Activated naive CD8-positive, alpha-beta T cell treated with anti-CD3 and anti-CD28 coated beads, Interleukin-2, amount 10 ng/mL, durations not matched to agents 7 days and 5 days (primary cell): ENCODE measurements at regions of chr2 and their contacts with region 1.

Region 1: DNA sequence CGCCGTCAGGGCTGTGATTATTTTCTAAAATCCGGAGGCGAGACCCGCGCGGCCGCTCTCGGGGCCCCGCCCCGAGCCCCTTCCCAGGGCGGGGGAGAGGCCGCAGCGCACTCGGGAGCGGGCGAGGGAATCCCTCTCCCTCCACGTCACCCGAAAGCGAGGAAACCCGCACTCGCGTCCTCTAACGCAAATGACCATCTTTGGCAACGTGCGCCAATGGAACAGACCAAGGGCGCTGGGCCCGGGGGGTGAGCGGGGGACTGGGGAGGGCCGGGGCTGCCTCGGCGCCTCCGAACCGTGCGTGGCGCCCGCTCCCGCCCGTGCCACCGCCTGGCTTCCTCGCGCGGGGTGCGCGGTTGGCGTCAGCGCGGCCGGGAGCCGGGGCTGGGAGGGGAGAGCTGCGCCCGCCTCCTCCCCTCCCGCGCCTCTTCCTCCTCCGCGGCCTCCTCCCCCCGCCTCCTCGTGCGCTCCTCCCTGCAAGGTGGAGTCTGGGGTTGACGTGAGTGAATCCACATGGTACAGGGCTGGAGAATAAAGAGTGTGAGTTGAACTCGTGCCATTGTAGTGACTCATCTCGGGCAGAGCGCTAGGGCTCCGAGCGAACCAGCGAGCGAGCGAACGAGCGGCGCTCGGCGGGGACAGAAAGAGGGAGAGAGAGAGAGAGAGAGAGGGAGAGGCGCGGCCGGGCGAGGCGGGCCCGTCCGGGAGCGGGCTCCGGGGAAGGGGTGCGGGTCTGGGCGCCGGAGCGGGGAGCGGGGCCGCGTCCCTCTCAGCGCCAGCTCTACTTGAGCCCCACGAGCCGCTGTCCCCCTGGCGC is at the start of gene FOSL2:
- DNase-seq: peak; percentile 91
- ATAC-seq: peak; percentile 79
- H3K4me3 Mint-ChIP-seq: peak within 1 kb of the TSS; percentile 89
- H3K27ac Mint-ChIP-seq: peak within 1 kb of the TSS; percentile 98
- H3K4me1 Mint-ChIP-seq: peaks cover 24% of the 10 kb centered on the region
- H3K27me3 Mint-ChIP-seq: no peaks in the 10 kb centered on the region
- total RNA-seq, gene FOSL2: 24.9 to 30.1 TPM

Region 2: DNA sequence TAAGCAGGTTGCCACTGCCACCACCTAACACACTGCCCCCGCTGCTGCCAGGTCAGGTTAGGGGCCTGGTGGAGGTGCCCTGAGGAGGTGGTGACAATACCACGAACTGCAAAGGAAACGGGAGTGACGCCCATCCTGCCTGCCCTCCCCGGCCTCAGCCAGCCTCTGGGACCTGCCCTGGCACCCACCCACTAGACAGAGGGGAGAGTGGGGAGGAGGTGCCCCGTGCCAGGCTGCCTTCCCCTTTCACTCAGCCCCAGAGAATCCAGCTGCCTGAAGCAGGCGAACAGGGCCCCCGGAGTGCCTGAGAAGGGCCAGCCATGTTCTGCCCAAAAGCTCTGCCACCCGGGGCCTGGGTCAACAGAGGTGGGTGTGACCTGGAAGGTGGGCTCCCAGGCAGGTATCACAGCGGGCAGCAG is 44.3 kb before region 1 on chr2:
- POLR2A ChIA-PET with region 1: interaction called, 13 read pairs
- DNase-seq: peak; percentile 62
- ATAC-seq: peak; percentile 88
- H3K4me3 Mint-ChIP-seq: peak overlapping the region; percentile 22
- H3K27ac Mint-ChIP-seq: peak overlapping the region; percentile 77
- H3K4me1 Mint-ChIP-seq: peaks cover 12% of the 10 kb centered on the region
- H3K27me3 Mint-ChIP-seq: no peaks in the 10 kb centered on the region

Region 3: DNA sequence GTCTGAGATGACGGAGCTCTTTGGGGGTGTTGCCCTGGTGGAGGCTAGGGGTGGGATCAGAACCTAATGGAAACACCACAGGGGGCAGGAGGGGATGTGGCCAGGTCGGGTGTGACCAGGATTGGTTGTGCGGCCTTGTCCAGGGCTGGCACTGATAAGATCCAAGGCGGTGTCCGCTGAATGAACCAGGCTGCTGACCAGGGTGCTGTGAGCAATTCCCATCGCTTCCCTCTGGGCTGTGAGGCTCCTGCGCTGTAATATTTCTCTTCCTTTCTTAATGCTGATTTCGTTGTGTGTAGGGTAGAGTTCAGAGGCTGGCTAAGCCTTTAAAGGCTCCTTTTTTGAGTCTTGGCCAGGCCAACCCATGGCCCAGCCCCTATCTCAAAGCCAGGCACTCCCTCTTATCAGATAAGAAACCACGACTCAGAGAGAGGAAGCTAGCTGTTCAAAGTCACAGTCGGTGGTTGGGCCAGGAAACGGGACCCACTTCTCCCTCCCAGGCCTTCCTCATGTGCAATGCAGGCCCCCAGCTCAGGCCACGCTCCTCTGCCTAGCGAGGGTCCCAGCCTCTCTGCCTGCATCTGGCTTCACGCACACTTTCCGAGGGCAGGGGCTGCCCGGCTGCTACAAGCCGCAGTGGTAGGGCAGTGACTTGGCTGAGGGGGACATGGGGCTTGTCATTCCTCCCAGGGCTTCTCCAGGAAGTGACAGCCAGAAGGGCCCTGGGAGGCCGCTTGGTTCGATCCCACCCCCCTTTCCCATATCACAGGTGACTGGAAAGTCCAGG is 25.8 kb before region 1 on chr2:
- POLR2A ChIA-PET with region 1: interaction called, 22 read pairs
- DNase-seq: peak; percentile 71
- ATAC-seq: peak; percentile 93
- H3K4me3 Mint-ChIP-seq: peak overlapping the region; percentile 75
- H3K27ac Mint-ChIP-seq: peak overlapping the region; percentile 91
- H3K4me1 Mint-ChIP-seq: peaks cover 46% of the 10 kb centered on the region
- H3K27me3 Mint-ChIP-seq: peaks cover 15% of the 10 kb centered on the region

Region 4: GRCh38 chr2:28408764-28409599 is 16.5 kb after region 1 on chr2:
- POLR2A ChIA-PET with region 1: interaction called, 23 read pairs
- DNase-seq: peak; percentile 75
- ATAC-seq: peak; percentile 69
- H3K4me3 Mint-ChIP-seq: peak overlapping the region; percentile 63
- H3K27ac Mint-ChIP-seq: peak overlapping the region; percentile 96
- H3K4me1 Mint-ChIP-seq: peaks cover 59% of the 10 kb centered on the region
- H3K27me3 Mint-ChIP-seq: no peaks in the 10 kb centered on the region

Region 5: GRCh38 chr2:28475088-28475605 is 82.6 kb after region 1 on chr2:
- POLR2A ChIA-PET with region 1: no interaction called
- DNase-seq: no peak
- ATAC-seq: no peak
- H3K4me3 Mint-ChIP-seq: no peak overlapping the region
- H3K27ac Mint-ChIP-seq: no peak overlapping the region
- H3K4me1 Mint-ChIP-seq: peaks cover 11% of the 10 kb centered on the region
- H3K27me3 Mint-ChIP-seq: peaks cover 12% of the 10 kb centered on the region